A673 (cell line): ENCODE measurements at regions of chr6 and their contacts with region 1.

Region 1: DNA sequence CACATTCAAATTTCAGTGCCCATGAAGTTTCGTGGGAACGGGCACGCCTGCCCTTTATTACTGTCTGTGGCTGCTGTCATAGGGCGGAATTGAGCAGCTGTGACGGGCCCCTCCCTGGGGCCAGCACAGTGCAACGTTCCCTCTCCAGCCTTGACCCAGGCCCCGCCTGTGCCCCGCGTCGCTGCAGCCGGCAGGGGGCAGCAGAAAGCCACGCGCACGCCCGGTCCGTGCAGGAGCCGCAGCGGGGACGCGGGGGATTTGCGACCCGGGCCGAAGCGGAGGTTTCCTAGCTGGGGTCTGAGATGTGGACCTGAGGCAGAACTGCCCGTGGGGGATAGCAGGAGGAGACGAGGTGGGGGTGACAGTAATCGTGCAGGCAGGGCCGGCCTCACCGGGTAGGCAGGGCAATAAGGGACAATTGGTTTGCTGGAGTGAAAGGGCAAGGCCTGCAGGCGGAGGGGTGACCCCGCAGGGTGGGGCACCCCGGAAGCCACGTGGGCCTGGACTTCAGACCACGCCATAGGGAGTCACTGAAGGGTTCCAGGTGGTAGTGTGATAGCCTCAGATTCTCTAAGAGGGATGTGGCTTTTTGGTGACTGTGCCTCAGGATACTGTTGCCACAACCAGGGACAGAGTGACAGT is 54.4 kb downstream of the SYTL3 start:
- DNase-seq: peak; percentile 78
- H3K4me3 ChIP-seq: peak overlapping the region; percentile 31
- H3K27ac ChIP-seq: no peak overlapping the region
- H3K4me1 ChIP-seq: peaks cover 11% of the 10 kb centered on the region
- H3K27me3 ChIP-seq: no peaks in the 10 kb centered on the region
- CTCF ChIP-seq: peak; percentile 99

Region 2: GRCh38 chr6:158669145-158670035 is 34.9 kb before region 1 on chr6:
- CTCF ChIA-PET with region 1: no interaction called
- POLR2A ChIA-PET with region 1: no interaction called
- intact Hi-C with region 1: no loop called
- DNase-seq: no peak
- H3K4me3 ChIP-seq: no peak overlapping the region
- H3K27ac ChIP-seq: no peak overlapping the region
- H3K4me1 ChIP-seq: no peaks in the 10 kb centered on the region
- H3K27me3 ChIP-seq: no peaks in the 10 kb centered on the region
- CTCF ChIP-seq: no peak

Region 3: DNA sequence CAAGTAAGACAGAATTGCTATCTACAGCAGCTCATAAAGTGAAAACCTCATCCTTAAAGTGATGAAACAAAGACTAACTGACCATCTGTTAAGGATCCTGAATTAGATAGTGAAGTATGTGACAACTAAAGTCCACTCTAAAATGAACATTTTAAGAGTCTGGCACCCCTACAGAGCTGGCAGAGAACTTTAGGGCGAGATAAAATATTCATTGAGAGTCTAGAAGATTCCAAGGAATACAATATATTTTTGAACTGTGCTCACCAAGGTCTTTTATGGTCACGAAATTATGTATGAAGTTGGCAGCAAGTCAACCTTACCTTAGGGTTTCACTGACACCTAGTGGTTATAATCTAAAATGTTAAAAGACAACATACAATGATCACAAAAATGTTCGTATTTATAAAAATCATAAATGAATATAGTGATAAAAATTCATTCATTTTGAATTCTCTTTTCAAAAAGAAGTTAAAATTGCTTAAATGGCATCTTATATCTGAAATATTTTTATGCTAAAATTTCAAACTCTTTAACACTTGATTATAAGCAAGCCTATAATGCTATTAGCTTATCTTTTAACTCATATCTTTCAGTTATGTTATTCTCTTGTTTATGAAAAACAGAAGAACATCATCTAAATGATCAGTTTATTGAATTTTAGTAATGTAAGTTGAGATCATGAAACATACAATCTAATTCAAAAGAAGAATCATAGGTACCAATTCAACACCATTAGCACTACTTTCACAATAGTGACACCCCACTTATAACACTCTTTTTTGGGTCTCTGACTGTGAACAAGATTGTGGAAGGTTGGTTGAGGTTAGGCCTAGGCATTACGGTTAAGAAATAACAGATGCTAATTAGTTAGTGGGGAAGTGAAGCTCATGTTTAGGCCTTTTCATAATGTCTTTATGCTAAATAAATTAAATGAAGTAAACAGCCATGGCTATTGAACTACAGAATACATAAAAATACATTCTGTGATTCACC is 268.2 kb after region 1 on chr6:
- CTCF ChIA-PET with region 1: no interaction called
- POLR2A ChIA-PET with region 1: no interaction called
- intact Hi-C with region 1: loop called (anchors 1 kb)
- DNase-seq: peak; percentile 67
- H3K4me3 ChIP-seq: no peak overlapping the region
- H3K27ac ChIP-seq: no peak overlapping the region
- H3K4me1 ChIP-seq: no peaks in the 10 kb centered on the region
- H3K27me3 ChIP-seq: no peaks in the 10 kb centered on the region
- CTCF ChIP-seq: peak; percentile 66; the same call in 1 of the 2 replicates

Region 4: DNA sequence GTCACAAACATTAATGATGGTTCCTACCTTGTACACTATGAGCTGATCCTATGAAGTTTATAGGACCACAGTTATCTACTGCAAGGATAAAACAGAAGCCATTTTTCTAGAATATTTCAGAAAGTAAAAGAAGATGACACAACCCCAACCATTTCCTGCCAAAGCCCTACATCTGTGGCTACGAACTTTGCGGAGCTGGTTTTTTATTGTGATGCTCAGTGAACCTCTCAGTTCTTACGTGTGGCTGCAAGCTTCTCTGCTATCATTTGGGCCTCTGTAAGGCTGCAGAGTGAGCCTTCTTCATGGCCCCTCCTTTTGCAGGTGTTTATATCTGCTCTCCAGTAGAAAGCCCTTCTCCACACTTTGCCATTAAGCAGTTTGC is 358.3 kb after region 1 on chr6:
- CTCF ChIA-PET with region 1: no interaction called
- POLR2A ChIA-PET with region 1: interaction called, 15 read pairs
- intact Hi-C with region 1: no loop called
- DNase-seq: no peak
- H3K4me3 ChIP-seq: no peak overlapping the region
- H3K27ac ChIP-seq: no peak overlapping the region
- H3K4me1 ChIP-seq: no peaks in the 10 kb centered on the region
- H3K27me3 ChIP-seq: peaks cover 9% of the 10 kb centered on the region
- CTCF ChIP-seq: no peak

Region 5: DNA sequence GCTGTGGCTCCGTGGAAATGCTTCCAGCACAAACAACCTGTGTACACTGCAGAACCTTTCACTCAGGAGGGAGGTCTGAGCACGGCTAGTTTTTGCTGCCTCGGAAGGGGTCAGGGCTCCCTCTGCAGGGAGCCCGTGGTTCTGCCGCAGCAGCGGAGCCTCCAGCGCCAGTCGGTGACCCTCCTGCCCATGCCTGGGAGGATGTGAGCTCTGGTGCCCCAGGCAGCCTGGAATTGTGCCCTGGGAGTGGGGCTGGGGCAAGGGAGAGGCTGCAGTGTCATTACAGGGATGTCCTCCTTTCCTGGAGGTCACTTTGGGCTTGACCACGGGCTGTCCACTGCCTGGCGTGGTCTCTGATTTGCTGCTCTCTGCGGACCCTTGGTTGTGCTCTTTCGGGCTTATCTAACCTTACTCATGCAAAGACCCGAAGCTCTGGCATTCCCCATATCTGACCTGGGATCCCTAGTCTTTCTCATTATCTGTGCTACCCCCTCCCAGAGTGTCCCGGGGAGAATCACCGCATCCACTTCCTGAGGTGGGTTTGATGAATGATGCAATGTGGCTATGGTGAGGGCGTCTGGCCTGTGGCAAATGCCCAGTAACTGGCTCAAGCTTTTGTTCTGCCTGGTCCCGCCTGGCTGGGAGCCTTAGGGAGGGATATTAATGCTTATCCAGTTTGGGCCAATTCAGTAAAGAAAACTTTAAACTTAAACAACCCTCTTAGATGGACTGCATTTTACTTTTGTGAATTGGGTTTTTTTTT is 400.0 kb after region 1 on chr6:
- CTCF ChIA-PET with region 1: no interaction called
- POLR2A ChIA-PET with region 1: no interaction called
- intact Hi-C with region 1: loop called (anchors 10 kb)
- DNase-seq: peak; percentile 59
- H3K4me3 ChIP-seq: no peak overlapping the region
- H3K27ac ChIP-seq: no peak overlapping the region
- H3K4me1 ChIP-seq: no peaks in the 10 kb centered on the region
- H3K27me3 ChIP-seq: no peaks in the 10 kb centered on the region
- CTCF ChIP-seq: peak; percentile 84

Region 6: DNA sequence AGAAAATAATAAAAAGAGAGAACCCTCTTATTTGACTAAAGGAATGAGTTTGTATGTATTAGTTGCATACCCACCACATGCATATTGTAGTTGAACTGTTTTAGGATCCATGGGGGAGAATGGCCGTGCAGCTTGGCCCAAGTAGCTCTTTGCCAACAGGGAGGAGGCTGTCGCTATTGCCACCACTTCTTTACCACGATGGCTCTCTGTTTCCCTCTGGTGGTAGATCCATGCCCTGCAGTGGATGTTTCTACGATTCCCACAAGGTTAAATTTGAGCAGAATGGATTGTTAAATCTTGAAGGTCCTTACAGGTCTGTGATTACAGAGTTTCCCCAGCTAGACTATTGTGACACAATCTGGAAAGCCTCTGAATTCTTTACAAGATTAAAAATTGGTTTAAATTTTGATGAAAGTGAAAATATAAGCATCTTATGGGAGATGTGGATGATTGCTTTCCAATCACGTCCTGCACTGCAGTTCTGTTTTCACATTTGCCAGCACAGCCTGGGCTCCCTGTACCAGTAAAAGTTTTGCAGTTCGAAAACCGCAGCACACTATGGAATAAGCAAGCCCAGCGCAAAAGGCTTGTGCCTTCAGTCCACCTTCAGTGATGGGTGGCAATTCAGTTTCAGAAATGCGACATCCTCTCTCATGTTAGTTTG is 430.5 kb after region 1 on chr6:
- CTCF ChIA-PET with region 1: interaction called, 3 read pairs
- POLR2A ChIA-PET with region 1: no interaction called
- intact Hi-C with region 1: loop called (anchors 2 kb)
- DNase-seq: peak; percentile 75
- H3K4me3 ChIP-seq: no peak overlapping the region
- H3K27ac ChIP-seq: no peak overlapping the region
- H3K4me1 ChIP-seq: no peaks in the 10 kb centered on the region
- H3K27me3 ChIP-seq: peaks cover 10% of the 10 kb centered on the region
- CTCF ChIP-seq: peak; percentile 93

Region 7: DNA sequence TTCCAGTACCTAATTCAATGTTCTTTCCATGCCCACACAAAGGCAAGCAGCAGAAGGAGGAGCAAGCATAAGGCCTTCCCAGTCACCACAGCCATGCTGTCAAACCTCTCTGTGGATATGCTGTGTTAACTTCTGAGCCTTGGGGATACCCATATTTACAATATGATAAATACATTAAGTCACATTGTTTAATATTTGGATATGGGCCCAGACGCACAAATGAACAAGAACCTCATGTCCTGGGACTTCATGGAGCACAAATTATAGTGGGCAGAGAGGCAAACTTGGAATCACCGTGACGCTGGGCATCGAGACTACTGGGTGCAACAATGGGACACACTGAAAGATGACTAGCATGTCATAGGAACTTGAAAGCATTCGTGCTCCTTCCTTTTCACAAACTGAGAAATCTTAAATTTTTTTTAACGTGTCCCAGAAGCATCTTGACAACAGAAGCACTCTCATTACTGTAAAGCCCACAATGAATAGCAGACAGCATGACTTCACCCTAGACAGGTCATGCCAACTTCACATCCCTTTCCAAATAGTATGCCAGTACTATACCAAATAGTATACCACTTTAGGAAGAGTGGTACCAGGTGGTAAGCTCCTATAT is 972.7 kb after region 1 on chr6:
- CTCF ChIA-PET with region 1: no interaction called
- POLR2A ChIA-PET with region 1: no interaction called
- intact Hi-C with region 1: no loop called
- DNase-seq: no peak
- H3K4me3 ChIP-seq: no peak overlapping the region
- H3K27ac ChIP-seq: no peak overlapping the region
- H3K4me1 ChIP-seq: no peaks in the 10 kb centered on the region
- H3K27me3 ChIP-seq: no peaks in the 10 kb centered on the region
- CTCF ChIP-seq: no peak

Region 8: DNA sequence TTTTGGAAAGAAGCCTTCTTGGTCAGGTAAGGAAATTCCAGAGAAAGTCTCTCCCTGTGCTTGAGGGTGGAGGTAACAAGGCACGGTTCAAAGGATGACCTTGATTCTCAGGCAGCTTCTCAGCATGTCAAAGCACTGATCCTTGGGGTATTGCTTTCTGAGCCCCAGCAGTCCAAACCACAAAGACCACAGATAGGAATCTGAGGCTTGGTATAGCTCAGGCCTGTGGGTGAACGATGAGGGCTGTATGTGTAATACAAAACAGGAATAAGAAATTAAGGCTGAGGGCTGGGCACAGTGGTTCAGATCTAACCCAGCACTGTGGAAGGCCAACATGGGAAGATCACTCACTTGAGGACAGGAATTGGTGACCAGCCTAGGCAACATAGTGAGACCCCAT is 1347.1 kb after region 1 on chr6:
- CTCF ChIA-PET with region 1: no interaction called
- POLR2A ChIA-PET with region 1: no interaction called
- intact Hi-C with region 1: no loop called
- DNase-seq: no peak
- H3K4me3 ChIP-seq: no peak overlapping the region
- H3K27ac ChIP-seq: no peak overlapping the region
- H3K4me1 ChIP-seq: no peaks in the 10 kb centered on the region
- H3K27me3 ChIP-seq: no peaks in the 10 kb centered on the region
- CTCF ChIP-seq: no peak